ENCODE measurements at regions of chr1 and their contacts with region 1.

Region 1: GRCh38 chr1:153990468-153991150 is at the start of gene RPS27:
- DNase-seq: peak; percentile 76 to 97 (median 92)
- ATAC-seq: peak; percentile 90
- H3K4me3 ChIP-seq: peak within 1 kb of the TSS; percentile 82
- H3K4me3 Mint-ChIP-seq: peak within 1 kb of the TSS; percentile 83 to 99 (median 96)
- H3K27ac ChIP-seq: peak within 1 kb of the TSS; percentile 99
- H3K27ac Mint-ChIP-seq: peak within 1 kb of the TSS; percentile 92 to 100 (median 99)
- H3K4me1 ChIP-seq: peaks cover 26 to 34% of the 10 kb centered on the region in 2 donors
- H3K4me1 Mint-ChIP-seq: peaks cover 32 to 62% (median 44%) of the 10 kb centered on the region in 7 donors
- H3K27me3 ChIP-seq: no peaks in the 10 kb centered on the region
- H3K27me3 Mint-ChIP-seq: peaks cover 2 to 8% (median 4%) of the 10 kb centered on the region in 5 donors
- total RNA-seq, gene RPS27: 2,313 to 8,530 (median 5,699) TPM

Region 2: DNA sequence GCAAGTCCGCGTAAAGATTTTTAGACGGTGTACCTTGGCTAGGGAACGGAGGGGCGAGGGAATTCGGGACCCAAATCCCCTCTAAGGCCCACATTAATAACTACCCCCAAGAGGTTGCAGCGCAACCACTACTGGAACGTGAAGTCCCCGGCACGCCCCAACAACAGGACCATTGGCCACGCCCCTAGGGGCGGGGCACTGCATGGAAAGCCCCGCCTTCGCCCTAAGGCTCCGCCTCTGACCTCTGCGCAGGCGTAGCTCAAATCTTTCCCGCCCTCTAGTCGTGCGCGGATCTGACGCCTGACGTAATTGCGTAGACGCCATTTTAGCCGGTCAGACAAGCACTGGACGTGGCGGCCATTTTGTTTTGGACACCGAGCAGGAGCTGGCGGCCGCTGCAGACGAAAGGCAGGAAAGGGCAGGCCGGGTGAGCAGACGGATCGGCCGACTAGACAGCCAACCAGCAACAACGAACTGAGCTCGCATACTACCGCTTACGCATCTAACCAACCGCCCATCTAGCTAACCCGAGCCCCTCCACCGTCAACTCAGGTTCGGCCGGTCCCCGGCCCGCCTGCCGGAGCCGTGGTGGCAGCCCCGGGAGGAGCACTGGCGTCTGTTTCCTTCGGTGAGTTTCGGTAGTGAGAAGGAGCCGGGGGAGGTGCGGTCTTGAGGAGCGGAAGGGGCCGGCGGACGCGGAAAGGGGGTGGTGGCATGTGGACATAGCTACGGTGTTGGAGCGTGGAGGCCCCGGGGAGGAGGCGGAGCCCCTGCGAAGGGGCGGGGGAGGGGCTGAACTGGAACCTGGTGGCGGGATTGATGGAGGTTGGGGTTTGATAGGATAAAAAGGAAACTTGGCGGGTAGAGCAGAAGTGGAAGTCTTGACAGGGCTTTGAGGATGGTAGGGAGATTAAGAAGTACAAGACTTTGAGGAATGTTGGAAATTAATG is 356.6 kb before region 1 on chr1 and contains the start of gene CHTOP:
- CTCF ChIA-PET with region 1: no interaction called
- POLR2A ChIA-PET with region 1: interaction called, 10 read pairs
- intact Hi-C with region 1: loop called in 1 of 2 experiments (anchors 1 kb)
- DNase-seq: peak; percentile 96 to 99 (median 96)
- ATAC-seq: peak; percentile 95
- H3K4me3 ChIP-seq: peak within 1 kb of the TSS; percentile 99
- H3K4me3 Mint-ChIP-seq: peak within 1 kb of the TSS; percentile 97 to 100 (median 99)
- H3K27ac ChIP-seq: peak within 1 kb of the TSS; percentile 98
- H3K27ac Mint-ChIP-seq: peak within 1 kb of the TSS; percentile 98 to 100 (median 100)
- H3K4me1 ChIP-seq: peaks cover 11 to 25% of the 10 kb centered on the region in 2 donors
- H3K4me1 Mint-ChIP-seq: peaks cover 30 to 52% (median 41%) of the 10 kb centered on the region in 7 donors
- H3K27me3 ChIP-seq: no peaks in the 10 kb centered on the region
- H3K27me3 Mint-ChIP-seq: peaks cover 0 to 3% (median 0%) of the 10 kb centered on the region in 5 donors
- total RNA-seq, gene CHTOP: 85.2 to 143 (median 116) TPM

Region 3: DNA sequence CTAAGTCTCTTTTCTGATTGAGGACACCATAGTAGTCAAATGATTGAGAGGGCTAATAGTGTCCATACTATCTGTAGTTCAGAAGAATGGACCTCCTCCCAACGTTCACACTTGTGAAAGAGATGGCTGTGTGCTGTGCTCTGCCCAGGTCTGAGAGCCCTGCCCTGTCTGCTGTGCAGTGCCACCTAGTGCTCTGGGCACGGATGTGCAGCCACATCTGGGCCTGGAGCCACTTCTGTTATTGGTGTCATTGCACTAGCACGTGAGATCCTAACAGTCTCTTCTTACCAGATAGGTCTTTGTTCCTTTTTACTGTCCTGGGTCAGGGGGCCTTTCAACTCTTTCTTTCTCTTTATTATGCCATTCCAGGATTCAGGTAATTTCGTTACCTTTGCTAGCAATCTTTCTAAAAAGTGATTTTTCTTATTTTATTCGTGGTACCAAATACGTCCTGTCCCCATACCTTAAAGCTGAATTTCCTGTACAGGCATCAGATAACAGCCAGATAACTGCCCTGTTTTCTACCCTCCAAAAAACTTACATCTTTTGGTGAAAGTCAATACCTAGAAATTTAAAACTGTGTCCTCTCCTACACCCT is 241.1 kb before region 1 on chr1:
- CTCF ChIA-PET with region 1: no interaction called
- POLR2A ChIA-PET with region 1: interaction called, 3 read pairs
- intact Hi-C with region 1: loop called in 1 of 2 experiments (anchors 1 kb)
- DNase-seq: peak; percentile 62 to 79 (median 76)
- ATAC-seq: peak; percentile 100
- H3K4me3 ChIP-seq: no peak overlapping the region
- H3K4me3 Mint-ChIP-seq: no peak overlapping the region
- H3K27ac ChIP-seq: no peak overlapping the region
- H3K27ac Mint-ChIP-seq: peak overlapping the region in 4 of 9 donors; percentile 0 to 71 (median 8)
- H3K4me1 ChIP-seq: no peaks in the 10 kb centered on the region
- H3K4me1 Mint-ChIP-seq: peaks cover 0 to 9% (median 4%) of the 10 kb centered on the region in 7 donors
- H3K27me3 ChIP-seq: no peaks in the 10 kb centered on the region
- H3K27me3 Mint-ChIP-seq: no peaks in the 10 kb centered on the region

Region 4: DNA sequence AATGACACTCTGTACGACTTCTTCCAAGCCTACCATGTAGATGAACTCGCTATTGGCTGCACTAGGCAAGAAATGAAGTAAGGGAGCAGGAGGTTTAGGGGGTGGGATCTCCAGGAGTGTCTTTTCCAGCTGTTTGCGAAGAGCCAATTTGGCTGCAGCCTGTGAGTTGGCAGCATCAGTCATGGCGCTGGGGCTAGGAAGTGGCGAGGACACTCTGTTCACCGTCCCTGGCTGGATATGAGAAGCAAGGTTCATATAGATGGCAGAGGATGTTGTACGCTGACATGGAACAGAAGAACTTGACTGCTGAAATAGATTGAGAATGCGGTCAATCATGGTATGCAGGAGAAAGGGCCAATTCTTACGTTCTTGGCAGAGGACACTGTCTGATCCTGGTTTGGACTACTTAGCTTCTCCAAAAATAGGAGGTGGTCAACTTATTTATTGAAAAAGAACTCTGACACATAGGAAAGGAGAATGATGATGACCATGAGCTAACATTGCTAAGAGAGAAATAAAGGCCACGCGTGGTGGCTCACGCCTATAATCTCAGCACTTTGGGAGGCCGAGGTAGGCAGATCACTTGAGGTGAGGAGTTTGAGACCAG is 174.2 kb before region 1 on chr1:
- CTCF ChIA-PET with region 1: interaction called, 19 read pairs
- POLR2A ChIA-PET with region 1: interaction called, 6 read pairs
- intact Hi-C with region 1: loop called (anchors 1 kb)
- DNase-seq: no peak
- ATAC-seq: no peak
- H3K4me3 ChIP-seq: no peak overlapping the region
- H3K4me3 Mint-ChIP-seq: no peak overlapping the region
- H3K27ac ChIP-seq: no peak overlapping the region
- H3K27ac Mint-ChIP-seq: peak overlapping the region in 2 of 9 donors; percentile 19 to 26
- H3K4me1 ChIP-seq: no peaks in the 10 kb centered on the region
- H3K4me1 Mint-ChIP-seq: peaks cover 0 to 5% (median 2%) of the 10 kb centered on the region in 7 donors
- H3K27me3 ChIP-seq: no peaks in the 10 kb centered on the region
- H3K27me3 Mint-ChIP-seq: no peaks in the 10 kb centered on the region

Region 5: GRCh38 chr1:153977250-153978240 is 13.1 kb before region 1 on chr1 and contains the start of gene JTB:
- CTCF ChIA-PET with region 1: interaction called, 18 read pairs
- POLR2A ChIA-PET with region 1: interaction called, 157 read pairs
- intact Hi-C with region 1: loop called (anchors 1 kb)
- DNase-seq: peak; percentile 65 to 89 (median 78)
- ATAC-seq: peak; percentile 98
- H3K4me3 ChIP-seq: peak within 1 kb of the TSS; percentile 94
- H3K4me3 Mint-ChIP-seq: peak within 1 kb of the TSS; percentile 92 to 99 (median 97)
- H3K27ac ChIP-seq: peak within 1 kb of the TSS; percentile 96
- H3K27ac Mint-ChIP-seq: peak within 1 kb of the TSS; percentile 84 to 98 (median 94)
- H3K4me1 ChIP-seq: peaks cover 9 to 15% of the 10 kb centered on the region in 2 donors
- H3K4me1 Mint-ChIP-seq: peaks cover 23 to 51% (median 40%) of the 10 kb centered on the region in 7 donors
- H3K27me3 ChIP-seq: no peaks in the 10 kb centered on the region
- H3K27me3 Mint-ChIP-seq: no peaks in the 10 kb centered on the region
- total RNA-seq, gene JTB: 78.4 to 134 (median 104) TPM

Region 6: GRCh38 chr1:154014154-154014910 is 23.7 kb after region 1 on chr1:
- CTCF ChIA-PET with region 1: no interaction called
- POLR2A ChIA-PET with region 1: no interaction called
- intact Hi-C with region 1: no loop called
- DNase-seq: no peak
- ATAC-seq: no peak
- H3K4me3 ChIP-seq: no peak overlapping the region
- H3K4me3 Mint-ChIP-seq: no peak overlapping the region
- H3K27ac ChIP-seq: no peak overlapping the region
- H3K27ac Mint-ChIP-seq: peak overlapping the region in 1 of 9 donors; percentile 54
- H3K4me1 ChIP-seq: no peaks in the 10 kb centered on the region
- H3K4me1 Mint-ChIP-seq: no peaks in the 10 kb centered on the region
- H3K27me3 ChIP-seq: no peaks in the 10 kb centered on the region
- H3K27me3 Mint-ChIP-seq: peaks cover 0 to 2% (median 0%) of the 10 kb centered on the region in 5 donors

Region 7: GRCh38 chr1:154272217-154272998 is 281.8 kb after region 1 on chr1 and contains the start of gene HAX1:
- CTCF ChIA-PET with region 1: no interaction called
- POLR2A ChIA-PET with region 1: interaction called, 18 read pairs
- intact Hi-C with region 1: loop called (anchors 1 kb)
- DNase-seq: peak; percentile 74 to 99 (median 97)
- ATAC-seq: peak; percentile 95
- H3K4me3 ChIP-seq: peak within 1 kb of the TSS; percentile 98
- H3K4me3 Mint-ChIP-seq: peak within 1 kb of the TSS; percentile 94 to 99 (median 97)
- H3K27ac ChIP-seq: peak within 1 kb of the TSS; percentile 92
- H3K27ac Mint-ChIP-seq: peak within 1 kb of the TSS; percentile 97 to 99 (median 99)
- H3K4me1 ChIP-seq: peaks cover 10 to 20% of the 10 kb centered on the region in 2 donors
- H3K4me1 Mint-ChIP-seq: peaks cover 20 to 47% (median 42%) of the 10 kb centered on the region in 7 donors
- H3K27me3 ChIP-seq: no peaks in the 10 kb centered on the region
- H3K27me3 Mint-ChIP-seq: no peaks in the 10 kb centered on the region
- total RNA-seq, gene HAX1: 71.9 to 111 (median 104) TPM